ENCODE measurements at regions of chr11 and their contacts with region 1.

Region 1: GRCh38 chr11:456533-456932 is 6.5 kb downstream of the PTDSS2 start:
- DNase-seq: no peak
- ATAC-seq: no peak

Region 2: GRCh38 chr11:494761-495536 is 38.4 kb after region 1 on chr11:
- intact Hi-C with region 1: loop called (anchors 5 kb)
- DNase-seq: peak; percentile 64
- ATAC-seq: no peak

Measured in Right ventricle myocardium inferior (tissue), 1 donor.